Adrenal gland (tissue), 19 donors: ENCODE measurements at regions of chr11 and their contacts with region 1.

Region 1: DNA sequence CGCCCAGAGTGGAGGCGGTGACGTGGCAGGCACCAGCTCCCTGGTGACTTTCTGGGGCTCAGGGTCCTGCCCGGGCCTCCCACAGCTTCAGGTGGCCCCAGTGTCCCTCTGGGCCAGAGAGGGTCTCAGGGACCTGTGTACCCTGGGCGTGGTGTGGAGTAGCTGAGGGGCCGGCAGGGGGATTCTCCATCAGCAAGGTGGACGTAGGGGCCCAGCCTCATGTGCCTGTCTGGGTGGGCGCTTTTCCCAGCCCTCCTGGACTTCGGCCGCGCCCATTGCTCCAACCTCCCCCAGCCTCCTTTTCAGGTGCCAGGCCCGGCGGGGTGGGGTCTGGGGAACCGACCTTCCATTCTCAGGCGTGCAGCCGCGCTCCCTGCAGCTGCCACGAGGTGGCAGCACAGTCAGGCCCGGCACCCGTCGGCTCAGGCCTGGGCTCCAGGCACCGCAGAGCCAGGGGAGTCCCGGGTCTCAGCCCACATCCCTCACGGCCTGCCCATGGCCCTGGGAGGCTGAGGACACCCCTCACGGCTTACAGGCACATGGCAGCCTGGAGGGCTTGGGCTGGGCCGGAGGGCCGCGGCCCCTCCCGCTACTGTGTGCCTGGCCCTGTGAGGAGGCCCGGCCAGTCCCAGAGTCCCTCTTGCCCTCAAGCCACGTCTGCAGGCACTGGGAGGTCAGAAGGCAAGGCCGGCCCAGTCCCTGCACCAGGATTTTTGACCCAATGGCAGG is 19.9 kb upstream of the MUC5B start:
- DNase-seq: peak in 6 of 7 donors; percentile 54 to 66 (median 62)
- H3K4me3 ChIP-seq: no peak overlapping the region
- H3K27ac ChIP-seq: no peak overlapping the region
- H3K4me1 ChIP-seq: no peaks in the 10 kb centered on the region
- H3K27me3 ChIP-seq: peaks cover 24% of the 10 kb centered on the region
- CTCF ChIP-seq: peak; percentile 74 to 96 (median 83)
- POLR2A ChIP-seq: no peak

Region 2: GRCh38 chr11:1029654-1030053 is 173.3 kb before region 1 on chr11:
- intact Hi-C with region 1: no loop called
- DNase-seq: no peak
- H3K4me3 ChIP-seq: no peak overlapping the region
- H3K27ac ChIP-seq: no peak overlapping the region
- H3K4me1 ChIP-seq: peaks cover 0 to 4% of the 10 kb centered on the region in 2 donors
- H3K27me3 ChIP-seq: no peaks in the 10 kb centered on the region
- CTCF ChIP-seq: no peak
- POLR2A ChIP-seq: no peak

Region 3: GRCh38 chr11:1335811-1336761 is 133.1 kb after region 1 on chr11:
- intact Hi-C with region 1: no loop called
- DNase-seq: peak; percentile 49 to 86 (median 78)
- H3K4me3 ChIP-seq: peak overlapping the region in 1 of 4 donors; percentile 56
- H3K27ac ChIP-seq: peak overlapping the region in 3 of 5 donors; percentile 2 to 90 (median 44)
- H3K4me1 ChIP-seq: peaks cover 11 to 12% of the 10 kb centered on the region in 2 donors
- H3K27me3 ChIP-seq: no peaks in the 10 kb centered on the region
- CTCF ChIP-seq: no peak
- POLR2A ChIP-seq: no peak

Region 4: GRCh38 chr11:1515082-1516060 is 312.4 kb after region 1 on chr11:
- intact Hi-C with region 1: loop called (anchors 2 to 5 kb)
- DNase-seq: peak; percentile 73 to 88 (median 81)
- H3K4me3 ChIP-seq: no peak overlapping the region
- H3K27ac ChIP-seq: no peak overlapping the region
- H3K4me1 ChIP-seq: peaks cover 0 to 14% of the 10 kb centered on the region in 2 donors
- H3K27me3 ChIP-seq: no peaks in the 10 kb centered on the region
- CTCF ChIP-seq: peak; percentile 81 to 95 (median 92)
- POLR2A ChIP-seq: no peak

Region 5: DNA sequence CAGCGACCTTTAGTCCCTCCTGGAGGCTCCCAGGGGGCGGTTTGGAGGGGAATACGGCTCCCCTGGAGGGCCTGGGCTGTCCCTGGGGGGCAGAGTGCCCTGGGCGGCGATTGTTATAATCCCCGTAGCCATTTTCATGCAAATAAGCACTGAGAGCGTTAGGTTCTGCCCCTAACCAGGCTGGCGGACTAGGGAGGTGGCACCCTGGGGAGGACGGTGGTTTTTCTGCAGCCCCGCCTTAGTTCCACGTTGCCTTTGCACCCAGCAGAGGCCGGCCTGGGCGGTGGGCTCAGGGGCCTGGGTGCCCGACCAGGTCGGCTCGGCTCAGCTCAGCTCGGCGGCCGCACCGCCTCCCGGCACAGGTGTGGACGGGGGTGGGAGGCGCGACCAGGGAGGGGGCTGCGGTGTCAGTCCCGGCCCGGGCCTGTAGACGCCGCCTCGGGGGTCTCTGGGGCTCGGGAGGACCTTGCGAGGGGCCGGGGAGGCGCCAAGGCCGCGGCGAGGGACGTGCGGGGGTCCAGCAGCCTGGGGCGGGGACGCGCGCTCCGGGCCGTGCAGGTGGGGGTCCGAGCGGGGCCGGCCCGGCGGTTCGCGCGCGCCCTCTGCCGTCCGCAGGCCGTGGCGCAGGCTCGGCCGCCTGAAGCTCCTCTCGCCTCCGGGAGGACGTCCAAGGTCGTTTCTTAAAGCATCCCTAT is 371.4 kb after region 1 on chr11:
- intact Hi-C with region 1: loop called in 1 of 2 experiments (anchors 5 kb)
- DNase-seq: peak in 5 of 7 donors; percentile 50 to 71 (median 63)
- H3K4me3 ChIP-seq: no peak overlapping the region
- H3K27ac ChIP-seq: peak overlapping the region in 1 of 5 donors; percentile 75
- H3K4me1 ChIP-seq: peaks cover 0 to 5% of the 10 kb centered on the region in 2 donors
- H3K27me3 ChIP-seq: peaks cover 18% of the 10 kb centered on the region
- CTCF ChIP-seq: peak in 3 of 6 experiments; percentile 90 to 95 (median 91)
- POLR2A ChIP-seq: no peak